Caco-2 (cell line): ENCODE measurements at regions of chr3 and their contacts with region 1.

Region 1: DNA sequence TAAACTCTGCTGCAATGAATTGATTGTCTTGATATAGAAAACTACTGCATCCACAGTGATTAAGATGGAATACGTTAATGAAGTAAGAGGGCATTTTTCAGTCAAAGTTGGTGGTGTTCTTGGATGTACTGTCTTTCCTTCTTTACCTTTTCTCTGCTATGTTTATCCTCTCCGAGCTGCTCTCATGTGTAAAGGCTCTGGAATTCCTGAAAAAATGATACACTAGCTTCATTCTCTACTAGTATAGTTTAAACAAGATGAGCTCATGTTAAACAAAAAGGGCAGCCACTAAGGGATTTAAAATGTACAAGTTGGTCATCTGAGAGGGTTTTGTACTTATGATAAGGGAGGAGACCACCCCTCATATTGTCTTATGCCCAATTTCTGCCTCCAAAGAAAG is 504.6 kb upstream of the NECTIN3 start:
- DNase-seq: no peak
- H3K4me3 ChIP-seq: no peak overlapping the region
- H3K4me3 Mint-ChIP-seq: peak overlapping the region; percentile 72
- H3K27ac Mint-ChIP-seq: peak overlapping the region; percentile 89
- H3K4me1 ChIP-seq: peaks cover 32% of the 10 kb centered on the region
- H3K4me1 Mint-ChIP-seq: peaks cover 19% of the 10 kb centered on the region
- H3K27me3 ChIP-seq: no peaks in the 10 kb centered on the region
- H3K27me3 Mint-ChIP-seq: no peaks in the 10 kb centered on the region
- CTCF ChIP-seq: no peak

Region 2: DNA sequence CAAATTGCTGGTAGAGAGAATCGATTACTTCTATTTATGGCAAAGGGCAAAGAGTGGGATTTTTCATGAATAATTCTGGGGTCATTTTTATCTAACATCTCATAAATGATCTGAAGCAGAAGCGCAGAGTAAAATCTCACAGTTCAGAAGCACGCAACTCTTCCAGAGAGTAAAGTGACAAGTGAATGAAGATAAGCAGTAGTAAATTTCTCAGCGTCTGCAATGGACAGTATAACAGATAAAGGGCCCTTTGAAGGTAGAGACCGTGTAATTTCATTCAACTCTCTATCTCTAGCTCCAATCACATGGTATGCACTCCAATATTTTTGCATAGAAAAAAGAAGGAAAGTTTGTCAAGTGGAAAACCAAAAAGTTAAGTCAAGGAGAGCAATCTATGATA is 16.5 kb before region 1 on chr3:
- CTCF ChIA-PET with region 1: no interaction called
- POLR2A ChIA-PET with region 1: no interaction called
- intact Hi-C with region 1: loop called (anchors 1 kb)
- DNase-seq: peak in 1 of 2 experiments; percentile 30
- H3K4me3 ChIP-seq: no peak overlapping the region
- H3K4me3 Mint-ChIP-seq: peak overlapping the region; percentile 49
- H3K27ac Mint-ChIP-seq: peak overlapping the region; percentile 61
- H3K4me1 ChIP-seq: peaks cover 36% of the 10 kb centered on the region
- H3K4me1 Mint-ChIP-seq: peaks cover 27% of the 10 kb centered on the region
- H3K27me3 ChIP-seq: no peaks in the 10 kb centered on the region
- H3K27me3 Mint-ChIP-seq: no peaks in the 10 kb centered on the region
- CTCF ChIP-seq: no peak

Region 3: DNA sequence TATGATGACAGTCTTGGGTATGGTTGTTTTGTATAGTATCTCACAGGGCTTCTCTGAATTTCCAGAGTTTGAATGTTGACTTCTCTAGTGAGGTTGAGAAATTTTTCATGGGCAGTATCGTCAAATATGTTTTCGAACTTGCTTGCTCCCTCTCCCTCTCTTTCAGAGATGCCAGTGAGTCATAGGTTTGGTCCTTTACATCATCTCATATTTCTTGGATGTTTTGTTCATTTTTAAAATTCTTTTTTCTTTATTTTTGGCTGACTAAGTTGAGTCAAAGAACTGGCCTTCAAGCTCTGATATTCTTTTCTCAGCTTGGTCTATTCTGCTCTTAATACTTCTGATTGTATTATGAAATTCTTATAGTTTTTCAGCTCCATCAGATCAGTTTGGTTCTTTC is 222.3 kb after region 1 on chr3:
- CTCF ChIA-PET with region 1: no interaction called
- POLR2A ChIA-PET with region 1: no interaction called
- intact Hi-C with region 1: no loop called
- DNase-seq: no peak
- H3K4me3 ChIP-seq: no peak overlapping the region
- H3K4me3 Mint-ChIP-seq: no peak overlapping the region
- H3K27ac Mint-ChIP-seq: no peak overlapping the region
- H3K4me1 ChIP-seq: no peaks in the 10 kb centered on the region
- H3K4me1 Mint-ChIP-seq: peaks cover 16% of the 10 kb centered on the region
- H3K27me3 ChIP-seq: no peaks in the 10 kb centered on the region
- H3K27me3 Mint-ChIP-seq: no peaks in the 10 kb centered on the region
- CTCF ChIP-seq: no peak